ENCODE measurements at regions of chr12 and their contacts with region 1.

Region 1: DNA sequence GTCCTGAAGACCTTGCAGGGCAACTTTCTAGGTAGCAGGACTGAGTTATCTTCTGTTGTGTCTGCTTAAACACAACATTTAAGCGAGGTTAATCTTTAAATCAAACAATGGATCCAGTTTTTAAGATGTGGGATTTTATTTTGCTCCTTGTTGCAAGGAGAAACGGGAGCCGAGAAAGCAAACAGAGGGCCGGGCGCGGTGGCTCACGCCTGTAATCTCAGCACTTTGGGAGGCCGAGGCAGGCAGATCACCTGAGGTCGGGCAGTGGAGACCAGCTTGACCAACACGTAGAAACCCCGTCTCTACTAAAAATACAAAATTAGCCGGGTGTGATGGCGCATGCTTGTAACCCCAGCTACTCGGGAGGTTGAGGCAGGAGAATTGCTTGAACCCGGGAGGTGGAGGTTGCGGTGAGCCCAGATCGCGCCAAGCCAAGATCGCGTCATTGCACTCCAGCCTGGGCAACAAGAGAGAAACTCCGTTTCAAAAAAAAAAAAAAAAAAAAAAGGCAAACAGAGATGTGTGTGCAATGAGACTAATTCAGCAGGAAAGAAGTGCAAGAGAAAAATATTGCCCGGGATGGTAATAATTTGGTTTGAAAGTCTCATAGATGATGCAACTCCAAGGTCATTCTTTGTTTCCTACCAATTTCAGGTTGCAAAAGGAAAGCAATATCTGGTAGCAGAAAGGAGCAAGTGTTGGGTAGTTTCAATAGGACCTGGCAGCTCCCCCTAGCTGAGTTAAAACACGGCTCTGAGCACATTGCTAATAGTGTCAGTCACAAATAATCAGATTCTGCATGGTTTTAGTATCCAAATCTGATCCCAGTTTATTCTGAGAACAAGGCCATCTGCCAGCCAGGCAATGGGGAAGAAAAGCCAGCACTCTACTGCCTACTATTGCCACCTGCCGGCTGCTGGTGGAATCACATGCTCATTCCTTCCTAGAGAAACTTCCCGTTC is 141.4 kb downstream of the PPM1H start:
- DNase-seq: peak; percentile 36 to 93
- H3K4me3 ChIP-seq: peak overlapping the region in 1 of 2 donors; percentile 23
- H3K27ac ChIP-seq: peak overlapping the region; percentile 14 to 19
- H3K4me1 ChIP-seq: peaks cover 5 to 15% of the 10 kb centered on the region in 2 donors
- H3K27me3 ChIP-seq: no peaks in the 10 kb centered on the region
- CTCF ChIP-seq: peak; percentile 79 to 97 (median 93)

Region 2: DNA sequence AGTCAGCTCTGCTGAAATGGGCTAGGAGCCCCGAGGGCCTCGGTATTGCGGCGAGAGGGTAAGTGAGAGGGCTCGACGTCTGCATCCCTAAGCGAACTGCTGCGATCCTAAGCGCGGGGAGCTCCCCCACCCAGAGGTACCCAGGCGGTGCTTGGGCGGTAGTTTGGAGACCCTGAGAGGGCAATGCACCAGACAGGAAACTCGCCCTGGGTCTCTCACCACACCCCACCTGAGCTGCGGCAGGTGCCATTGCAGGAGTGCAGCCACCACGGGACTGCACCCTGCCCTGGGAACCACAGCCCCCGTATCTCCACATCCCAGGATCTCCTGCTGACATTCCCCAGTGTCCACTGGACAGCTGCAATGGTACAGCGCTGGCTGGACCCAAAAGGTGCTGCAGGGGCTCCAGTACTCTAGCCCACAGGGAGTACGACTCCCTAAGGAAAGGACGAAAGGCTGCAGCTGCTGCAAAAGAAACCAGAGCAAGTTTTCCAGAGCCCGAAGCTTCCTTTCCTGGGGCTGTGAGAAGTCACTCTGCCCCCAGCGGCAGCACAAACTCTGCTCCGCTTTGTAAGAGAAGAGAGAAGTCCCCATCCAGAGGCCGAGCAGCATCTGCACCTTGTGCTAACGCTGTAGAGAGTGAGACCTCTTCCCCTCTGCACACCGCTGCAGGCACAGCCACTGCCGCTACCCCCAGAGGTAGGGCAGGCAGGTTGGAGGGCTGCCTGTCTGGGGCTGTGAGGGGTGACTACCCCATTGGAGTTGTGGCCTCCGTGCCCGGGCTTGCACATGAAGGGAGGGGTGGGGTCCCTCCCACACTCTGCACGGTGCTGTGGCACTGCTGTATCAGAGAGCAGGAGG is 358.0 kb before region 1 on chr12:
- intact Hi-C with region 1: loop called (anchors 1 kb)
- DNase-seq: peak in 1 of 2 donors; percentile 67
- H3K4me3 ChIP-seq: peak overlapping the region; percentile 52 to 75
- H3K27ac ChIP-seq: no peak overlapping the region
- H3K4me1 ChIP-seq: peaks cover 0 to 2% of the 10 kb centered on the region in 2 donors
- H3K27me3 ChIP-seq: no peaks in the 10 kb centered on the region
- CTCF ChIP-seq: peak; percentile 29 to 68 (median 42)

Region 3: GRCh38 chr12:62581288-62582064 is 212.1 kb before region 1 on chr12:
- intact Hi-C with region 1: loop called (anchors 2 kb)
- DNase-seq: no peak
- H3K4me3 ChIP-seq: no peak overlapping the region
- H3K27ac ChIP-seq: no peak overlapping the region
- H3K4me1 ChIP-seq: no peaks in the 10 kb centered on the region
- H3K27me3 ChIP-seq: no peaks in the 10 kb centered on the region
- CTCF ChIP-seq: peak; percentile 53 to 68 (median 54)

Region 4: GRCh38 chr12:62640910-62641448 is 152.6 kb before region 1 on chr12:
- intact Hi-C with region 1: no loop called
- DNase-seq: no peak
- H3K4me3 ChIP-seq: no peak overlapping the region
- H3K27ac ChIP-seq: no peak overlapping the region
- H3K4me1 ChIP-seq: no peaks in the 10 kb centered on the region
- H3K27me3 ChIP-seq: no peaks in the 10 kb centered on the region
- CTCF ChIP-seq: no peak

Region 5: GRCh38 chr12:62731055-62731820 is 62.3 kb before region 1 on chr12:
- intact Hi-C with region 1: loop called (anchors 2 kb)
- DNase-seq: no peak
- H3K4me3 ChIP-seq: peak overlapping the region; percentile 24 to 54
- H3K27ac ChIP-seq: peak overlapping the region; percentile 54 to 72
- H3K4me1 ChIP-seq: peaks cover 0 to 15% of the 10 kb centered on the region in 2 donors
- H3K27me3 ChIP-seq: no peaks in the 10 kb centered on the region
- CTCF ChIP-seq: no peak

Region 6: GRCh38 chr12:62971769-62972525 is 178.4 kb after region 1 on chr12:
- intact Hi-C with region 1: no loop called
- DNase-seq: no peak
- H3K4me3 ChIP-seq: no peak overlapping the region
- H3K27ac ChIP-seq: peak overlapping the region; percentile 27 to 45
- H3K4me1 ChIP-seq: peaks cover 0 to 5% of the 10 kb centered on the region in 2 donors
- H3K27me3 ChIP-seq: no peaks in the 10 kb centered on the region
- CTCF ChIP-seq: no peak